ENCODE measurements at regions of chr20 and their contacts with region 1.

Region 1: GRCh38 chr20:45138561-45139300 is 14.5 kb upstream of the WFDC12 start:
- DNase-seq: peak; percentile 95
- ATAC-seq: peak; percentile 96
- H3K4me3 Mint-ChIP-seq: no peak overlapping the region
- H3K27ac Mint-ChIP-seq: no peak overlapping the region
- H3K4me1 Mint-ChIP-seq: no peaks in the 10 kb centered on the region
- H3K27me3 Mint-ChIP-seq: peaks cover 30% of the 10 kb centered on the region
- CTCF ChIP-seq: peak; percentile 98

Region 2: GRCh38 chr20:45064812-45065211 is 73.9 kb before region 1 on chr20:
- CTCF ChIA-PET with region 1: no interaction called
- POLR2A ChIA-PET with region 1: no interaction called
- DNase-seq: no peak
- ATAC-seq: no peak
- H3K4me3 Mint-ChIP-seq: no peak overlapping the region
- H3K27ac Mint-ChIP-seq: no peak overlapping the region
- H3K4me1 Mint-ChIP-seq: peaks cover 5% of the 10 kb centered on the region
- H3K27me3 Mint-ChIP-seq: no peaks in the 10 kb centered on the region
- CTCF ChIP-seq: no peak

Region 3: GRCh38 chr20:45095753-45096371 is 42.9 kb before region 1 on chr20:
- CTCF ChIA-PET with region 1: interaction called, 11 read pairs
- POLR2A ChIA-PET with region 1: no interaction called
- DNase-seq: peak; percentile 70
- ATAC-seq: peak; percentile 50
- H3K4me3 Mint-ChIP-seq: no peak overlapping the region
- H3K27ac Mint-ChIP-seq: no peak overlapping the region
- H3K4me1 Mint-ChIP-seq: peaks cover 12% of the 10 kb centered on the region
- H3K27me3 Mint-ChIP-seq: peaks cover 48% of the 10 kb centered on the region
- CTCF ChIP-seq: peak; percentile 66; the same call in 1 of the 2 replicates

Region 4: DNA sequence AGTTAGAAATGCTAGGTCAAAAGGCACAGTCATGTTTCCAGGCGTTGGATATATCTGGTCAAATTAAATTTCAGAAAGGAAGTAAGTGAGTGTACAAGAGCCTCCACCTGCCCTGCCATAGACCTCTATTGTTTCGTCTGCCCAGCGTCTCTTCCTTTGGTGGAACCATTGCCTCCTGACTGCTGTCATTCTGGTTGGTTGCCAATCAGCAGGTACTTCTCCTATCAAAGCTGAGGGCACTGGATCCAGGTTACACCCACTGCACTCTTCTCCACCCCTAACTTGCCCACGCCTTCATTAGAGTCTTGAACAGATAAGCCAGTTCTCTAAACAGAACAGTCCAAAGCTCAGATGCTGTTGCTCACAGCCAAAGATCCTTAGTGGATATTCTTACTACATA is 21.1 kb before region 1 on chr20:
- CTCF ChIA-PET with region 1: interaction called, 29 read pairs
- POLR2A ChIA-PET with region 1: no interaction called
- DNase-seq: no peak
- ATAC-seq: peak; percentile 44; the same call in 1 of the 2 replicates
- H3K4me3 Mint-ChIP-seq: no peak overlapping the region
- H3K27ac Mint-ChIP-seq: no peak overlapping the region
- H3K4me1 Mint-ChIP-seq: peaks cover 8% of the 10 kb centered on the region; the same call in 1 of the 2 replicates
- H3K27me3 Mint-ChIP-seq: peaks cover 14% of the 10 kb centered on the region; the same call in 1 of the 2 replicates
- CTCF ChIP-seq: no peak

Region 5: GRCh38 chr20:45157962-45158361 is 19.2 kb after region 1 on chr20:
- CTCF ChIA-PET with region 1: interaction called, 13 read pairs
- POLR2A ChIA-PET with region 1: no interaction called
- DNase-seq: no peak
- ATAC-seq: no peak
- H3K4me3 Mint-ChIP-seq: no peak overlapping the region
- H3K27ac Mint-ChIP-seq: no peak overlapping the region
- H3K4me1 Mint-ChIP-seq: no peaks in the 10 kb centered on the region
- H3K27me3 Mint-ChIP-seq: peaks cover 31% of the 10 kb centered on the region
- CTCF ChIP-seq: no peak

Region 6: GRCh38 chr20:45174434-45175364 is 36.0 kb after region 1 on chr20 and contains the start of gene PI3:
- CTCF ChIA-PET with region 1: no interaction called
- POLR2A ChIA-PET with region 1: no interaction called
- DNase-seq: no peak
- ATAC-seq: no peak
- H3K4me3 Mint-ChIP-seq: no peak within 1 kb of the TSS
- H3K27ac Mint-ChIP-seq: no peak within 1 kb of the TSS
- H3K4me1 Mint-ChIP-seq: peaks cover 7% of the 10 kb centered on the region; the same call in 1 of the 2 replicates
- H3K27me3 Mint-ChIP-seq: peaks cover 16% of the 10 kb centered on the region
- CTCF ChIP-seq: no peak
- total RNA-seq, gene PI3: not detected in 3 replicates

Region 7: GRCh38 chr20:45218133-45218532 is 79.4 kb after region 1 on chr20:
- CTCF ChIA-PET with region 1: interaction called, 11 read pairs
- POLR2A ChIA-PET with region 1: no interaction called
- DNase-seq: no peak
- ATAC-seq: no peak
- H3K4me3 Mint-ChIP-seq: no peak overlapping the region
- H3K27ac Mint-ChIP-seq: no peak overlapping the region
- H3K4me1 Mint-ChIP-seq: no peaks in the 10 kb centered on the region
- H3K27me3 Mint-ChIP-seq: peaks cover 37% of the 10 kb centered on the region
- CTCF ChIP-seq: no peak

Region 8: DNA sequence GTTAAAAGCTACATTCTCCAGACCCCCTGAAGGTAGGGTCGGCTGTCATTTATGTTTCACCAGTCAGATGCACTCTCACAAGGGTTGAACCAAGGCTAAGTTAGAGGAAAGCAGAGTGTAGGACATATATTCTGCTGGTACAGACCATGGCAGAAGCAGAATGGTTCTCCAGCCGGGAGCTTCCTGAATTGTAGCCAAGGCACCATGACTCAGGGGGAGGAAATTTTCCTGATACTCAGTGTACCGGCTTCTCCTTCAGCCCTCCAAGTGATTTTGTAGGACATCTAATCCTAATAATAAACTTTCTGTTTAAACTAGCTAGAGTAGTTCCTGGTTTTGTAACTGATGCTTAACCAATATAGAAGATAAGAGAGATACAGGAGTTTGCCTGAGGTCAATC is 129.8 kb after region 1 on chr20:
- CTCF ChIA-PET with region 1: interaction called, 10 read pairs
- POLR2A ChIA-PET with region 1: no interaction called
- DNase-seq: no peak
- ATAC-seq: no peak
- H3K4me3 Mint-ChIP-seq: no peak overlapping the region
- H3K27ac Mint-ChIP-seq: no peak overlapping the region
- H3K4me1 Mint-ChIP-seq: peaks cover 17% of the 10 kb centered on the region
- H3K27me3 Mint-ChIP-seq: no peaks in the 10 kb centered on the region; the same call in 1 of the 2 replicates
- CTCF ChIP-seq: no peak

Measured in WTC11 (cell line).